H1 (cell line): ENCODE measurements at regions of chr3 and their contacts with region 1.

Region 1: GRCh38 chr3:189961525-189962161 is 159.1 kb downstream of the P3H2 start:
- DNase-seq: peak; percentile 53 to 91
- H3K4me3 ChIP-seq: no peak overlapping the region
- H3K27ac ChIP-seq: no peak overlapping the region
- H3K4me1 ChIP-seq: peaks cover 0 to 5% (median 2%) of the 10 kb centered on the region in 4 experiments; a peak in 3 of 7 replicates
- H3K27me3 ChIP-seq: no peaks in the 10 kb centered on the region
- CTCF ChIP-seq: peak; percentile 35 to 95 (median 88)
- EP300 ChIP-seq: no peak
- POLR2A ChIP-seq: no peak
- RAD21 ChIP-seq: peak; percentile 94 to 96

Region 2: DNA sequence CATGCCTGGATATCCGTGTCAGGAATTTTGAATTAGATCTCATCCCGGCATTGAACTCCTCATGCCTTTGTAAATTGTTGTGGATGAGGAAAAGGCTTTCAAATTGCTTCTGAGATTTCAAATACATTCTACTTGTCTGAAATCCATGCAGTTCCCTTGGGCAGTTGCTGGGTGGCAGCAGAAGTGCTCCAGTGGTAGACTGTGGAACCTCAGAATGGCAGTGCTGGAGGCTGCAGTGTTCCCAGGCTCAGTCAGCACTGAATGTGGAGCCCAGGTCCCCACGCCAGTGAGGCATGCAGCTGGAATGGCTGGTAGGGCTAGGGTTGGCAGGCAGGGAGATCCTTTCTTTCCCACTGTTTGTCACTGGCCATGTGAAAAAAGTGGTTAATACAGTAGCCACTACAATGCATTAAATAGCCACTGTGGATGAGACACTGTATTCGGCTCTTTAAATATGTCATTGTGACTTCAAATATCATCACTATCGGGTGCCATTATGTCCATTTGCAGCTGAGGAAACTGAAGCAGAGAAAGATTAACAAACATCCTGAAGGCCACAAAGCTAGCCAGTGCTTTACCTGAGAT is 691.3 kb before region 1 on chr3:
- CTCF ChIA-PET with region 1: interaction called, 17 read pairs
- POLR2A ChIA-PET with region 1: no interaction called
- DNase-seq: peak in 1 of 2 experiments; percentile 33
- H3K4me3 ChIP-seq: no peak overlapping the region
- H3K27ac ChIP-seq: no peak overlapping the region
- H3K4me1 ChIP-seq: no peaks in the 10 kb centered on the region
- H3K27me3 ChIP-seq: no peaks in the 10 kb centered on the region
- CTCF ChIP-seq: peak; percentile 62 to 77 (median 75)
- EP300 ChIP-seq: no peak
- POLR2A ChIP-seq: no peak
- RAD21 ChIP-seq: peak; percentile 82 to 88

Region 3: DNA sequence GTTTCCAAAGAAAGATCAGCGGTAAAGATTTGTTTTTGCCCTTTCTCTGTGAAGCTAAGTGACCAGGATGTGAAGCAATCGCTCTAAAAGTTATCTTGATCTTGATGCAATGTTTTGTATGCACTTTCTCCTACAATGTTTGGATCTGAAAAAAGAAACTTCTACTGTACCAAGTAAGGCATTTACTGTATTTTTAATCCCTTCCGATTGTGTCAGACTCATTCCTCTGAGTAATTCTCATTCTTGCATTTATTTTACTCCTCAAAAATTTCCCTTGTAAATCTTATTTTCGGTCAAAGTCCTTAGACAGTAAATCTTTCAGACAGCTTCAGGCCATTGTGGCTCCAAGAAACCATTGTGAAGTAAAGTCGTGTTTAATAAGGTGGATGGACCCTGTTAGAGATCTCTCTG is 188.6 kb before region 1 on chr3:
- CTCF ChIA-PET with region 1: no interaction called
- POLR2A ChIA-PET with region 1: no interaction called
- DNase-seq: no peak
- H3K4me3 ChIP-seq: no peak overlapping the region
- H3K27ac ChIP-seq: no peak overlapping the region
- H3K4me1 ChIP-seq: no peaks in the 10 kb centered on the region
- H3K27me3 ChIP-seq: peaks cover 28 to 59% (median 52%) of the 10 kb centered on the region in 4 experiments
- CTCF ChIP-seq: no peak
- EP300 ChIP-seq: no peak
- POLR2A ChIP-seq: no peak
- RAD21 ChIP-seq: no peak

Region 4: GRCh38 chr3:189927975-189928895 is 33.4 kb before region 1 on chr3:
- CTCF ChIA-PET with region 1: no interaction called
- POLR2A ChIA-PET with region 1: no interaction called
- DNase-seq: no peak
- H3K4me3 ChIP-seq: no peak overlapping the region
- H3K27ac ChIP-seq: no peak overlapping the region
- H3K4me1 ChIP-seq: peaks cover 0 to 4% (median 0%) of the 10 kb centered on the region in 4 experiments; a peak in 1 of 7 replicates
- H3K27me3 ChIP-seq: no peaks in the 10 kb centered on the region
- CTCF ChIP-seq: no peak
- EP300 ChIP-seq: no peak
- POLR2A ChIP-seq: no peak
- RAD21 ChIP-seq: no peak

Region 5: DNA sequence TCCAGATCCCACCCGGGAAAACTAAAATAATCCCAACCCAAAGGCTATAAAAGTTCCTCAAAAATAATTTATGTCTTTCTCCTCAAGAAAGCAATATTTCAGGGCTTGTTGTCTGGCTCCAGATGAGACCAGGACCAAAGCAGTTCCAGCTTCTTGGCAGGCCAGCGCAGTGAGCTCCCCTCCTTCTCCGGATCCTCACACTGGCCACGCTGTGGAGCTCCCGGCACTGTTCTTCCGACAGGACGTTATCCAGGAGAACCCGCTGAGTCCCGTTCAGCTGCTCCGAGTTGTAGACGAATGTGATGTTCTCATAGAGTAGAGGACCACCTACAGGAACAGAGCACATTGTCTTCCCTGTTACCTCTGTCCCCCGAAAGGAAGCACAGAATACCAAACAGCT is 12.7 kb after region 1 on chr3:
- CTCF ChIA-PET with region 1: interaction called, 33 read pairs
- POLR2A ChIA-PET with region 1: no interaction called
- DNase-seq: no peak
- H3K4me3 ChIP-seq: no peak overlapping the region
- H3K27ac ChIP-seq: no peak overlapping the region
- H3K4me1 ChIP-seq: no peaks in the 10 kb centered on the region
- H3K27me3 ChIP-seq: no peaks in the 10 kb centered on the region
- CTCF ChIP-seq: no peak
- EP300 ChIP-seq: no peak
- POLR2A ChIP-seq: no peak
- RAD21 ChIP-seq: no peak

Region 6: DNA sequence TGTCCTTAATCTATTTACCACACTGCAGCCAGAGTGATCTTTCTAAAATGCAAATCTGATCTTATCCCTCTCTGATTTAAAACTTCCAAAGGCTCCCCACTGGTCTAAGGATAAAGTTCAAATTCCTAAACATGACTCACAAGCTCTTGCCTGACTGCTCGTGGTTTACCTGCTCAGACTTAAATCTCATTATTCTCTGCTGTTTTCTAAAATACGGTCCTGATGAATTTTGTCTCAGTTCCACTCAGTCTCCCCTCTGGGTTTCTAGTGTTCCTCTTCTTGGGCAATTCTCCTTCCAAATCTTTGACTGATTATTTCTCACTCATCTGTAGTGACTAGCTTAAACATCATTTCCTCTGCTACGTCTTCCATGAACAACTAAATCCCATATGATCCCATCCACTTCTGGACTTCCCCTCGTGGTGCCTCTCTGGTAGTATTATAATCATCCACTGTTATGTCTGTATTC is 50.7 kb after region 1 on chr3:
- CTCF ChIA-PET with region 1: interaction called, 15 read pairs
- POLR2A ChIA-PET with region 1: no interaction called
- DNase-seq: no peak
- H3K4me3 ChIP-seq: peak overlapping the region in 1 of 4 experiments; percentile 14; a peak in 1 of 8 replicates
- H3K27ac ChIP-seq: peak overlapping the region; percentile 60
- H3K4me1 ChIP-seq: peaks cover 7 to 25% (median 22%) of the 10 kb centered on the region in 4 experiments; a peak in 6 of 7 replicates
- H3K27me3 ChIP-seq: no peaks in the 10 kb centered on the region
- CTCF ChIP-seq: no peak
- EP300 ChIP-seq: no peak
- POLR2A ChIP-seq: no peak
- RAD21 ChIP-seq: no peak

Region 7: GRCh38 chr3:190120269-190121060 is 158.8 kb after region 1 on chr3 and contains the start of gene P3H2:
- CTCF ChIA-PET with region 1: interaction called, 27 read pairs
- POLR2A ChIA-PET with region 1: interaction called, 3 read pairs
- DNase-seq: peak; percentile 82 to 84
- H3K4me3 ChIP-seq: peak within 1 kb of the TSS; percentile 55 to 76 (median 69)
- H3K27ac ChIP-seq: 0 out of 2 replicates have a peak within 1 kb of the TSS, but pooled peaks have one; percentile 8
- H3K4me1 ChIP-seq: peaks cover 0 to 16% (median 13%) of the 10 kb centered on the region in 4 experiments; a peak in 6 of 7 replicates
- H3K27me3 ChIP-seq: peaks cover 0 to 6% (median 1%) of the 10 kb centered on the region in 4 experiments; a peak in 4 of 7 replicates
- CTCF ChIP-seq: peak in 2 of 3 experiments; percentile 45 to 61; a peak in 3 of 4 replicates
- EP300 ChIP-seq: no peak
- POLR2A ChIP-seq: peak in 1 of 2 experiments; percentile 65; a peak in 1 of 3 replicates
- RAD21 ChIP-seq: peak; percentile 59 to 72
- total RNA-seq, gene P3H2: 40.5 and 48.6 TPM in 2 replicates

Region 8: GRCh38 chr3:190224863-190225692 is 263.4 kb after region 1 on chr3:
- CTCF ChIA-PET with region 1: interaction called, 35 read pairs
- POLR2A ChIA-PET with region 1: interaction called, 3 read pairs
- DNase-seq: no peak
- H3K4me3 ChIP-seq: no peak overlapping the region
- H3K27ac ChIP-seq: no peak overlapping the region
- H3K4me1 ChIP-seq: no peaks in the 10 kb centered on the region
- H3K27me3 ChIP-seq: no peaks in the 10 kb centered on the region
- CTCF ChIP-seq: peak in 2 of 3 experiments; percentile 39 to 40; a peak in 2 of 4 replicates
- EP300 ChIP-seq: no peak
- POLR2A ChIP-seq: no peak
- RAD21 ChIP-seq: peak; percentile 62 to 63

Region 9: GRCh38 chr3:190269101-190269500 is 307.5 kb after region 1 on chr3:
- CTCF ChIA-PET with region 1: no interaction called
- POLR2A ChIA-PET with region 1: no interaction called
- DNase-seq: no peak
- H3K4me3 ChIP-seq: no peak overlapping the region
- H3K27ac ChIP-seq: no peak overlapping the region
- H3K4me1 ChIP-seq: no peaks in the 10 kb centered on the region
- H3K27me3 ChIP-seq: no peaks in the 10 kb centered on the region
- CTCF ChIP-seq: no peak
- EP300 ChIP-seq: no peak
- POLR2A ChIP-seq: no peak
- RAD21 ChIP-seq: no peak